Endothelial cell of umbilical vein (primary cell): ENCODE measurements at regions of chr16 and their contacts with region 1.

Region 1: DNA sequence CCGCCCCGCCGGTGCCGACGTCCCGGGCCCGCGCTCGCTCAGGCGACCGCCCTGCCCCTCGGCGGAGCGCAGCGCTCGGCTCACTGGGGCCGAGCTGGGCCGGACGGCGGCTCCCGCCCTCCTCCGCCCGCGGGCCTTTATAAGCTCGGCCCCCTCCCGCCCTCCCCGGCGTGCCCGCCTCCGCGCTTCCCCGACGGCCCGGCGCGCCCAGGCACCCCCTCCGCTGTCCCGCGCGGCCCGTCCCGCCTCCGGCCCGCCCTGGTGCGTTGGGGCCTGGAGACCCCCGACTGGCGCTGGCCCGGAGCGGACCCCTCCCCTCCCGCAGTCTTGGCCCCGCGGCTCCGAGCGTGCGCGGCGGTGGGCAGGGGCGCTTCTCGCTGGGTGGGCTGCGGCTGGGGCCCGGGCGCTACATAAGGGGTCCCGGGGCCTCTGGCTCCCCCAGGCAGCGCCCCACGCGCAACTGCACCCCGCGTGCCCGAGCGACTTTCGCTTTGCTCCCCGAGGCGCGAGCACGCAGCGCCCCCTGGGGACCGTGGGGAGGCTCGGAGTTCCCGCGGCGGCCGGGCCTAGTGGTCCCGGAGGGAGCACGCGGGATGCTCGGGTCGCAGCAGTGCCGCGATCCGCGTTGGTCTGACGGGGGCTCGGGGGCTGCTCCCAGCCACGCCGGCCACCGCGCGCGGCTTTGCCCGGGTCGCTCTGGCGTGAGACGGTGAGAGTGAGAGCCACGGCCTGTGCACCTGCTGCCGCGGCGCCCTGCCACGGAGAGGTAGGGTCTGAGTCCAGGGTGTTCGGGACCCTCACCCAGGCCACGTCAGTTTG is at the start of gene PIEZO1:
- DNase-seq: peak; percentile 53
- H3K4me3 ChIP-seq: peak within 1 kb of the TSS; percentile 66 to 93 (median 66)
- H3K27ac ChIP-seq: peak within 1 kb of the TSS; percentile 86
- H3K4me1 ChIP-seq: peaks cover 28% of the 10 kb centered on the region
- H3K27me3 ChIP-seq: no peaks in the 10 kb centered on the region
- CTCF ChIP-seq: peak; percentile 89 to 92
- POLR2A ChIP-seq: peak; percentile 86
- total RNA-seq, gene PIEZO1: 306 and 322 TPM in 2 replicates

Region 2: GRCh38 chr16:88743693-88744576 is 41.4 kb before region 1 on chr16:
- CTCF ChIA-PET with region 1: interaction called, 165 read pairs
- POLR2A ChIA-PET with region 1: no interaction called
- dilution Hi-C with region 1: no loop called
- intact Hi-C with region 1: loop called (anchors 1 kb)
- DNase-seq: peak; percentile 62
- H3K4me3 ChIP-seq: no peak overlapping the region
- H3K27ac ChIP-seq: no peak overlapping the region
- H3K4me1 ChIP-seq: peaks cover 7% of the 10 kb centered on the region
- H3K27me3 ChIP-seq: no peaks in the 10 kb centered on the region
- CTCF ChIP-seq: peak; percentile 90 to 95
- POLR2A ChIP-seq: no peak

Region 3: GRCh38 chr16:88754912-88755744 is 30.2 kb before region 1 on chr16:
- CTCF ChIA-PET with region 1: interaction called, 20 read pairs
- POLR2A ChIA-PET with region 1: no interaction called
- dilution Hi-C with region 1: no loop called
- intact Hi-C with region 1: no loop called
- DNase-seq: peak; percentile 20
- H3K4me3 ChIP-seq: no peak overlapping the region
- H3K27ac ChIP-seq: no peak overlapping the region
- H3K4me1 ChIP-seq: peaks cover 5% of the 10 kb centered on the region
- H3K27me3 ChIP-seq: no peaks in the 10 kb centered on the region
- CTCF ChIP-seq: peak; percentile 41 to 43
- POLR2A ChIP-seq: no peak

Region 4: GRCh38 chr16:88770461-88771293 is 14.6 kb before region 1 on chr16:
- CTCF ChIA-PET with region 1: interaction called, 17 read pairs
- POLR2A ChIA-PET with region 1: interaction called, 7 read pairs
- dilution Hi-C with region 1: no loop called
- intact Hi-C with region 1: no loop called
- DNase-seq: peak; percentile 64
- H3K4me3 ChIP-seq: no peak overlapping the region
- H3K27ac ChIP-seq: peak overlapping the region; percentile 16
- H3K4me1 ChIP-seq: peaks cover 45% of the 10 kb centered on the region
- H3K27me3 ChIP-seq: no peaks in the 10 kb centered on the region
- CTCF ChIP-seq: no peak
- POLR2A ChIP-seq: no peak

Region 5: GRCh38 chr16:88803264-88803987 is 18.1 kb after region 1 on chr16 and contains the start of gene CDT1:
- CTCF ChIA-PET with region 1: interaction called, 7 read pairs
- POLR2A ChIA-PET with region 1: interaction called, 3 read pairs
- dilution Hi-C with region 1: no loop called
- intact Hi-C with region 1: loop called (anchors 1 kb)
- DNase-seq: peak; percentile 76
- H3K4me3 ChIP-seq: peak within 1 kb of the TSS; percentile 46 to 49 (median 47)
- H3K27ac ChIP-seq: peak within 1 kb of the TSS; percentile 58
- H3K4me1 ChIP-seq: peaks cover 10% of the 10 kb centered on the region
- H3K27me3 ChIP-seq: no peaks in the 10 kb centered on the region
- CTCF ChIP-seq: no peak
- POLR2A ChIP-seq: peak; percentile 82
- total RNA-seq, gene CDT1: 26.5 and 30.6 TPM in 2 replicates

Region 6: DNA sequence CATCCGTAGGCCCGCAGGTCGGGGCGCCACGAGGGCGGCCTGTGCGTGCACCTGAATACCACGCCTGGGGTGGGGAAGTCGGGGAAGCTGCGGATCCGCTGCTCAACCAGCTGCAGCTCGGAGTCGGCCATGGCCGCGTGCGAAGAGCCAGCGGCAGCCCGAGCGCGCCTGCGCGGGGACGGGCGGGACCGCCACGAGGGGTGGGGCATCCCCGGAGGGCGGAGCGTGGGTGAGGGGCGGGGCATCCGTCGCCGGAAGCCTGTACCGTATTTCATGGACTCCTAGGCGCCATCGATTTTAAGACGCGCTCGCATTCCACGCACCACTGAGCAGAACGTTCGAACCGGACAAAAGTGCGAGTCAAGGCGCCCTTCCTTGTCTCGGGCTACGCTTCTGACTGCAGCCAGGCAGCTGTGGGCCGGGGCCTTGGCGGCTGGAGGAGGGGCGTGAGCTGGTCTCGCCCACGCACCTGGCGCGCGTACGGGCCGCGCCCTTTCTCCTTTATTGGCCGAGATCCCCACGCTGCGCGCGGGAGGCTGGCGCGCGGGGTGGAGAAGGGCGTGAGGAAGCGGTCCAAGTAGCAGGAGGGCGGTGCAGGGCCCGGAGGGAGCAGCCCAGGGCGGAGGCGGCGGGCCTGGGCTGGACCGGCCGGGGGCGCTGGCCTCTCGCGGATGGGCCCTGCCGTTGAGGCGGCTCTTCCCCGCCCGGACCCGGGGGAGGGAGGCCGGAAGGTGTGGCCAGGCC is 26.6 kb after region 1 on chr16 and contains the start of gene APRT:
- CTCF ChIA-PET with region 1: interaction called, 28 read pairs
- POLR2A ChIA-PET with region 1: interaction called, 4 read pairs
- dilution Hi-C with region 1: no loop called
- intact Hi-C with region 1: no loop called
- DNase-seq: peak; percentile 94
- H3K4me3 ChIP-seq: peak within 1 kb of the TSS; percentile 42 to 54 (median 52)
- H3K27ac ChIP-seq: peak within 1 kb of the TSS; percentile 49
- H3K4me1 ChIP-seq: peaks cover 17% of the 10 kb centered on the region
- H3K27me3 ChIP-seq: no peaks in the 10 kb centered on the region
- CTCF ChIP-seq: peak; percentile 16 to 37
- POLR2A ChIP-seq: peak; percentile 97
- total RNA-seq, gene APRT: 148 and 152 TPM in 2 replicates

Region 7: GRCh38 chr16:88856828-88857733 is 71.8 kb after region 1 on chr16 and contains the starts of genes GALNS and TRAPPC2L:
- CTCF ChIA-PET with region 1: interaction called, 7 read pairs
- POLR2A ChIA-PET with region 1: no interaction called
- dilution Hi-C with region 1: no loop called
- intact Hi-C with region 1: loop called (anchors 2 kb)
- DNase-seq: peak; percentile 96
- H3K4me3 ChIP-seq: peak within 1 kb of the TSS; percentile 45 to 100 (median 72)
- H3K27ac ChIP-seq: peak within 1 kb of the TSS; percentile 1
- H3K4me1 ChIP-seq: peaks cover 4% of the 10 kb centered on the region
- H3K27me3 ChIP-seq: no peaks in the 10 kb centered on the region
- CTCF ChIP-seq: no peak
- POLR2A ChIP-seq: peak; percentile 90
- total RNA-seq, gene GALNS: 32.5 and 40.2 TPM in 2 replicates
- total RNA-seq, gene TRAPPC2L: 61.9 and 80.0 TPM in 2 replicates